ENCODE measurements at regions of chr1 and their contacts with region 1.

Region 1: GRCh38 chr1:153849487-153850185 is 73.1 kb downstream of the GATAD2B start:
- DNase-seq: peak; percentile 68
- H3K4me3 Mint-ChIP-seq: peak overlapping the region; percentile 24
- H3K27ac Mint-ChIP-seq: peak overlapping the region; percentile 75
- H3K4me1 Mint-ChIP-seq: peaks cover 20% of the 10 kb centered on the region
- H3K27me3 Mint-ChIP-seq: no peaks in the 10 kb centered on the region

Region 2: GRCh38 chr1:153880962-153881361 is 31.3 kb after region 1 on chr1:
- intact Hi-C with region 1: loop called (anchors 5 kb)
- DNase-seq: no peak
- H3K4me3 Mint-ChIP-seq: no peak overlapping the region
- H3K27ac Mint-ChIP-seq: no peak overlapping the region
- H3K4me1 Mint-ChIP-seq: peaks cover 1% of the 10 kb centered on the region
- H3K27me3 Mint-ChIP-seq: no peaks in the 10 kb centered on the region

Region 3: DNA sequence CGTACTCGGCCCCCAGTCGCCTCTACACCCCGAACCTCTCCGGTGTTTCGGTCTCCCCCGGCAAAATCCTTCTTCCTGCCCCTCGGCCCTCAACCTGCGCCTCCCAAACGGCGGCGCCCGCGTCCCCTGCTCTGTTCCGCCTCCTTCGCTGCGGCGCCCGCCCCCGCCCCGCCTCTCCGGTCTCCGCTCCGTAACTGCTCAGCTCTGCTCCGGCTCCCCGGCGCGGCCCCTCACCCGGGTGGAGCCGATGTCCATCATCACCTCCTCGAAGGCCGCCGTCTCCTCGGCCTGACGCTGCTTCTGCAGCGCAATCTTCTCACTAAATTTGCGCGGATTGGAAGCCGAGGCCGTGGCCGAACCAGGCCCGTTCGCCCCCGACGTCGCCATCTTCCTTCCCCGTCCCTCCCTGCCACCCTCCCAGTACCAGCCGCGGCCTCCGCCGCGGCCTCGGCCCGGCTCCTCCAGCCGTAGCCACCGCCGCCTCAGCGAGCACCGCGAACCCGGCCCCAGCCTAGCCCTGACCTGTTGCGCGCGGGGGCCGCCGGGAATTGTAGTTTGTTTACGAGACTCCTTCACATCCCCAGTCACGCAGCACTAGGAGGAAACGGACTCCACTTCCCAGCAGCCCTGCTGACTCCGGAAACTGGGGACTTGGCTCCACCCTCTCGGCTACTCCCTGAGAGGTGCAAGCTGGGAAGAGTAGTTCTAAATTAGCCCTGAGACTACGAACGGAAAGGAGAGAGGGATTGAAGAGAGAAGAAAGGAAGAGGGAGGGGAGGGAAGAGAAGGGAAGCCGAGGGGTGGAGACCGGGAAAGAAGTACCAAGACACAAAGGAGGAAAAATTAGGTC is 108.7 kb after region 1 on chr1 and contains the start of gene CRTC2:
- intact Hi-C with region 1: no loop called
- DNase-seq: peak; percentile 99
- H3K4me3 Mint-ChIP-seq: peak within 1 kb of the TSS; percentile 88
- H3K27ac Mint-ChIP-seq: peak within 1 kb of the TSS; percentile 94
- H3K4me1 Mint-ChIP-seq: peaks cover 52% of the 10 kb centered on the region
- H3K27me3 Mint-ChIP-seq: no peaks in the 10 kb centered on the region
- total RNA-seq, gene CRTC2: 72.4 and 76.8 TPM in 2 replicates